Activated T-helper 2 cell treated with anti-CD3 and anti-CD28 coated beads, Interferon-gamma antibody, Interleukin-2, Interleukin-4, amounts not matched to agents 10 μg/mL and 5 μg/mL and 100 μg/mL, durations not matched to agents 14 hours and 24 hours and 36 hours (primary cell): ENCODE measurements at regions of chr19 and their contacts with region 1.

Region 1: DNA sequence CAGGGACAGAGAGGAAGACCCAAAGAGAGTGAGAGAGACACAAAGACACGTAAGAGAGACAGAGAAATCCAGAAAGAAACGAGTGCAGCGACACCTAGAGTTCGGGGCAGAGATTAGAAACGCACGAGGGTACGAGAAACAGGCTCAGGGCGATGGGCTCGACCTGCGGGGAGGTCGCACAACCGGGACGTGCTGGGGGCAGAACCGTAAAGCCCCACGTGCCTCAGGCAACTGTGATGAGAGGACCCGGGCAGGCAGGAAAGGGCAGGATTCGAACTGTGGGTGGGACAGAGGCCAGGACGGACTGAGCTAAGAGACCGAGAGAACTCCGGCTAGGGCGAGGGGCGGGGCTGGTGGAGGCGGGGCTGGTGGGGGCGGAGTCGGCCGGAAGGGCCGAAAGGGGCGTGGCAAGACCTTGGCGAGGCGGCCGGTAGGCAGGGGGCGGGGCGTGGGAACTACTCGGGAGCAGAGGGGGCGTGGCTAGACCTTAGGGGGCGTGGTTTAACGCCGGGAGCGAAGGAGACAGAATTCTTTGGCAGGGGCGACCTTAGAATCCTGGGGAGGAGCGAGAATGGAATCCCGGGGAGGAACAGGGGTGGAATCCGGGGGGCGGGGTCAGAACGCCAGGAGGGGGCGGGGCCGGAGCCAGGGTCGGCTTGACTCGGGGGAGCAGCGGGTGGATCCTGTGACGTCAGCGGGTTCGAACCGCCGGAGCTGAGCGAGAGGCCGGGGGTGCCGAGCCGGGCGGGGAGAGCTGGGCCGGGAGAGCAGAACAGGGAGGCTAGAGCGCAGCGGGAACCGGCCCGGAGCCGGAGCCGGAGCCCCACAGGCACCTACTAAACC is at the start of gene NECTIN2:
- DNase-seq: peak; percentile 76
- H3K4me3 Mint-ChIP-seq: peak within 1 kb of the TSS; percentile 81
- H3K27ac Mint-ChIP-seq: peak within 1 kb of the TSS; percentile 64
- H3K4me1 Mint-ChIP-seq: peaks cover 15% of the 10 kb centered on the region
- H3K27me3 Mint-ChIP-seq: peaks cover 33% of the 10 kb centered on the region
- total RNA-seq, gene NECTIN2: 0.27 and 0.37 TPM in 2 replicates

Region 2: DNA sequence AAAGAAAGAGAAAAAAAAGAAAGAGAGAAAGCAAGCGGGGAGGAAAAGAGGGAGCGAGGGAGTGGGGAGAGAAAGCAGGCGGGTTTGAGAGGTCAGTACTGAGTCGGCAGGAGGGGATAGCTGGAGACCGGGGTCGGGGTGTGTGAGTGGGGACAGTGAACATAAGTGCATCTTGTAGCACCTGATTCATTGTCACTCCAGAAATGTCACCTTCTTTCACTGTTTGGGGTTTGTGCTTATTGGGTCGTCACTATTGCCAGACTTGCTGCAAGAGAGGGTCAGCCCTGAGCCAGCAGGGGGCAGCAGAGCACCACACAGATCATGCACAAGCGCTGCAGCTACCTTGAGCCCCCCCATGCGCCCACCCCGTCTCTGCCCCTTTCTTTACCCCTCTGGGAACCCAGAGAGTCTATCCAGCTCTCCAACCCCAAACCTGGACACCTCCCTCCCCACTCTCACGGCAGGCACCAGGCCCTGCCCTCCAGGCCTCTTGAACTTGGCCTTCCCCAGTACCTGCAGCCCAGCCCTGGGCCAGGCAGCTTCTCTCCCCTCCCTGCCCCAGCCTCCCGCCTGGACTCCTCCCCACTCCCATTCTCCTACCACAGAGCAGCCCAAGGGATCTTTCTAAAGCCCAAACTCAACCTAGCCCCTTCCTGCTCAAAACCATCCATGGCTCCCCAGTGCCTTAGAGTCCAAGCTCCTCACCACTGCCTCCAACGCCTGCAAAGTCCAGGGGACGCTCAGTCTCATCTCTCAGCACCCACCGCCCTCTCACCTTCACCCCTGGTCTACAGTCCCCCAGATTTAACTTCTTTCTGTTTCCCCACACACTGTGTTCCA is 156.6 kb before region 1 on chr19:
- intact Hi-C with region 1: loop called (anchors 10 kb)
- DNase-seq: peak; percentile 57
- H3K4me3 Mint-ChIP-seq: no peak overlapping the region
- H3K27ac Mint-ChIP-seq: no peak overlapping the region
- H3K4me1 Mint-ChIP-seq: peaks cover 38% of the 10 kb centered on the region
- H3K27me3 Mint-ChIP-seq: peaks cover 6% of the 10 kb centered on the region

Region 3: GRCh38 chr19:44723952-44724319 is 121.9 kb before region 1 on chr19:
- intact Hi-C with region 1: loop called (anchors 1 kb)
- DNase-seq: peak; percentile 72
- H3K4me3 Mint-ChIP-seq: no peak overlapping the region
- H3K27ac Mint-ChIP-seq: no peak overlapping the region
- H3K4me1 Mint-ChIP-seq: peaks cover 35% of the 10 kb centered on the region
- H3K27me3 Mint-ChIP-seq: no peaks in the 10 kb centered on the region

Region 4: GRCh38 chr19:44782729-44783128 is 63.1 kb before region 1 on chr19:
- intact Hi-C with region 1: loop called (anchors 1 kb)
- DNase-seq: no peak
- H3K4me3 Mint-ChIP-seq: no peak overlapping the region
- H3K27ac Mint-ChIP-seq: no peak overlapping the region
- H3K4me1 Mint-ChIP-seq: peaks cover 6% of the 10 kb centered on the region
- H3K27me3 Mint-ChIP-seq: peaks cover 1% of the 10 kb centered on the region

Region 5: DNA sequence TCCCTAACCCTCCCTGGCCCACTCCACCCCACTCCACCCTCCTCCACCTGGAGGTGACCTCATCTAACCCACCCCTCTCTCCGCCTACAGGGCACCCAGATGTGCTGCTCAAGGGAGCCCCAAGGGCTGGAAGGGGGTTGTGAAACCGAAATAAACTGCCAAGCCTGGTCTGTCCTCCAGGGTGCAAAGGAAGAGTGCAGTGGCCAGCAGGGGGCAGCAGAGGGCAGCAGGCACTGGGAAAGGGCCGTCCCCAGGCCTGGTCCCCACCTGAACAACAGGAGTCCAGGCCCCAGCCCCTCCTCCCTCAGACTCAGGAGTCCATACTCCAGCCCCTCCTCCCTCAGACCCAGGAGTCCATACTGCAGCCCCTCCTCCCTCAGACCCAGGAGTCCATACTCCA is 45.4 kb before region 1 on chr19:
- intact Hi-C with region 1: loop called (anchors 1 kb)
- DNase-seq: peak; percentile 78
- H3K4me3 Mint-ChIP-seq: no peak overlapping the region
- H3K27ac Mint-ChIP-seq: no peak overlapping the region
- H3K4me1 Mint-ChIP-seq: peaks cover 5% of the 10 kb centered on the region
- H3K27me3 Mint-ChIP-seq: no peaks in the 10 kb centered on the region

Region 6: DNA sequence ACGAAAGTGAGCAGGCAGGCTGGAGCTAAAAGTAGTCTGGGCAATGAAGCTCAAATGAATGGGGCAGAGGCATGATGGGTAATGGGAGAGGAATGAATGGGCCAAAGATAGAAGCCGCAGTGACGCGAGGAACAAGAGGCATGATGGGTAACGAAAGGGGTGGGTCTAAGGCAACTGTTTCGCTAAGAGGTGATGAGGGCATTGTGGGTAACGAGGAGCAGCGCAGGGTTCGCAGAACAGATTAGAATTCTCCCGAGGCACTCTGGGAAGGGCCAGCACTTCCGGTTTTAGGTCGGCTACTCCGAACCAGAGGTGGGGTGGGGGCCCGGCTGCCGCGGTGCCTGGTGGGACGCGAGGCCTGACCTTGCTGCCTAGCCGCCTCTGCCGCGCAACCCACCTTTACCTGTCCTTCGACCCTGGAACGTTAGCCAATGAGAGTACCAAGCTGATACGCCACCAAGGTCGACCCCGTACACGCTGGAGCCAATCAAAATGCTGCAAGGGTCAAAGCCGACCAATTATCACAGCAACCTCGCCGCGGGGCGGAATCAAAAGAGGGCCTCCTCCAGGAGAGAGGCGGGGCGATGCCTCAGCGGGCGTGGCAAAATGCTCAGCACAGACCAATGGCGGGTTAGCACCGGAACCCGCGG is 44.7 kb after region 1 on chr19:
- intact Hi-C with region 1: loop called (anchors 2 kb)
- DNase-seq: peak; percentile 100
- H3K4me3 Mint-ChIP-seq: peak overlapping the region; percentile 77
- H3K27ac Mint-ChIP-seq: peak overlapping the region; percentile 97
- H3K4me1 Mint-ChIP-seq: peaks cover 19% of the 10 kb centered on the region
- H3K27me3 Mint-ChIP-seq: no peaks in the 10 kb centered on the region

Region 7: DNA sequence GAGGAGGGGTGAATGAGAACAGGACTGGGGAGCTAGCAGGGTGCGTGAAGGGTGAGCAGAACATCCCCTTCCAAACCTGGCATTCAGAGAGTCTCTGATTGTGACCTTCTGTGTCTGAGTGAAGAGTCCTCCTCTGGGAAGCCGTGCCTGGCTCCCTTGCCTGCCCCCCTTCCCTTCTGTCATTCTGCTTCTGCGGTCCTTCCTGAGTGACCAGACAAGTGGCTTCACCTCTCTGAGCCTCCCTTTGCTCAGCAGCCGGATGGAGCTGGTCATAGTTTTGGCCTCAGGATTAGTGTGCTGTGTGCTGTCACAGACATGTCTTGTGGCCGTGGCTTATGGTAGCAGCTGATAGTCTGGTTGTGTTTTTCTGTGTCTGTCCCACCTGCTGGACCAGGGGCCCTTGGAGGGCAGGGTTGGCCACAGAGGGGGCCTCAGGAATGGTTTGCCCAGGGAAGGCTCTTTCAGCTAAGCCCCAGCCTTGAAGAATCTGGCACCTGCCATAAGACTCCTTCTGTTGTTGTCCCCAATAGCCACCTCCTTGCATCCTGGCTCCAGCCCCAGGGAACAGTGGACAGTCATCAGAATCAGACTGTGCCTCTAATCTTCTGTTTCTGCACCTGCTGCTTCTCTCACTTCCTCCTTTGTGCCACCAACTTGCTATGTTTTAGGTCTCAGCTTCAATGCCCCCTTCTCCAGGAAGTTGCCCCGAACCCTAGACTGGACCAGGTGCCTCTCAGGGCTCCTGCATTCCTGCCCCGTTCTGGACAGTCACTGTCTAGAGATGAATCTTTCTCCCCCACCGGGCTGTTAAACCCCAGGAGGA is 115.3 kb after region 1 on chr19:
- intact Hi-C with region 1: no loop called
- DNase-seq: no peak
- H3K4me3 Mint-ChIP-seq: no peak overlapping the region
- H3K27ac Mint-ChIP-seq: no peak overlapping the region
- H3K4me1 Mint-ChIP-seq: peaks cover 18% of the 10 kb centered on the region
- H3K27me3 Mint-ChIP-seq: no peaks in the 10 kb centered on the region